Activated CD4-positive, alpha-beta T cell treated with anti-CD3 and anti-CD28 coated beads for 36 hours (primary cell): ENCODE measurements at regions of chr12 and their contacts with region 1.

Region 1: GRCh38 chr12:130761537-130762318 is 45.6 kb upstream of the RIMBP2 start:
- DNase-seq: peak; percentile 84
- ATAC-seq: peak; percentile 68
- H3K4me3 Mint-ChIP-seq: peak overlapping the region; percentile 39
- H3K27ac Mint-ChIP-seq: no peak overlapping the region
- H3K4me1 Mint-ChIP-seq: peaks cover 4% of the 10 kb centered on the region
- H3K27me3 Mint-ChIP-seq: peaks cover 11% of the 10 kb centered on the region

Region 2: DNA sequence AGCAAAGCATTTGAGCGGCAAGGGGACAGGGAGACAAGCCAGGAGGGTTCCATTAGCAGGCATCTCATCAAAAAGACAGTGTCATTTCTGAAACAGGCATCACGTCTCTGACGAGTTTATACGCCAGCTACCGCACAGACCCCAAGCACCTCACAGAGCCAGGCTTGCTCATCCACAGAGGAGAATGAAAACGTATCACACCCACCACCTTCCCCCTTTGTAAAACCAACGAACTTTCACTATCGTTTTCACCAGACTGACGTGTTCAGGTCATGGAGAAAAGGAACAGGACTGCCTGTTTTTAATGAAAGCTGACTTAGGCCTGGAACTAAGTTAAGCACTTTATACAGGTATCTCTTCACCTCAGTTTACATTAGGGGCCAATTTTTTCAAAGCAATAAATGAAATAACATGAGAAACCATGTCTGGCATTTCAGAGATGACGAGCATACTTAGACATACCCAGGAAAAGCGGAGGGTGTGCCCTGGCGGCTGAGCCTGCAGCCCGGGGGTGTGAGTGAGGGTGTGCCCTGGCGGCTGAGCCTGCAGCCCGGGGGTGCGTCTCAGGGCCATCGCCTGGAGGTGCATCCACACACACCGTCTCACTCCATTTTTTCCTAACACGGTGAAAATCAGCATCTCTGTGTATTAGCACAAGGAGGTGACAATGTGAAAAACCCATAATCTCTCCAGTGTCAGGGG is 35.4 kb after region 1 on chr12:
- CTCF ChIA-PET with region 1: no interaction called
- POLR2A ChIA-PET with region 1: no interaction called
- intact Hi-C with region 1: loop called (anchors 1 to 5 kb)
- DNase-seq: peak; percentile 76
- ATAC-seq: peak; percentile 96
- H3K4me3 Mint-ChIP-seq: peak overlapping the region; percentile 49
- H3K27ac Mint-ChIP-seq: peak overlapping the region; percentile 88
- H3K4me1 Mint-ChIP-seq: peaks cover 19% of the 10 kb centered on the region
- H3K27me3 Mint-ChIP-seq: no peaks in the 10 kb centered on the region

Region 3: DNA sequence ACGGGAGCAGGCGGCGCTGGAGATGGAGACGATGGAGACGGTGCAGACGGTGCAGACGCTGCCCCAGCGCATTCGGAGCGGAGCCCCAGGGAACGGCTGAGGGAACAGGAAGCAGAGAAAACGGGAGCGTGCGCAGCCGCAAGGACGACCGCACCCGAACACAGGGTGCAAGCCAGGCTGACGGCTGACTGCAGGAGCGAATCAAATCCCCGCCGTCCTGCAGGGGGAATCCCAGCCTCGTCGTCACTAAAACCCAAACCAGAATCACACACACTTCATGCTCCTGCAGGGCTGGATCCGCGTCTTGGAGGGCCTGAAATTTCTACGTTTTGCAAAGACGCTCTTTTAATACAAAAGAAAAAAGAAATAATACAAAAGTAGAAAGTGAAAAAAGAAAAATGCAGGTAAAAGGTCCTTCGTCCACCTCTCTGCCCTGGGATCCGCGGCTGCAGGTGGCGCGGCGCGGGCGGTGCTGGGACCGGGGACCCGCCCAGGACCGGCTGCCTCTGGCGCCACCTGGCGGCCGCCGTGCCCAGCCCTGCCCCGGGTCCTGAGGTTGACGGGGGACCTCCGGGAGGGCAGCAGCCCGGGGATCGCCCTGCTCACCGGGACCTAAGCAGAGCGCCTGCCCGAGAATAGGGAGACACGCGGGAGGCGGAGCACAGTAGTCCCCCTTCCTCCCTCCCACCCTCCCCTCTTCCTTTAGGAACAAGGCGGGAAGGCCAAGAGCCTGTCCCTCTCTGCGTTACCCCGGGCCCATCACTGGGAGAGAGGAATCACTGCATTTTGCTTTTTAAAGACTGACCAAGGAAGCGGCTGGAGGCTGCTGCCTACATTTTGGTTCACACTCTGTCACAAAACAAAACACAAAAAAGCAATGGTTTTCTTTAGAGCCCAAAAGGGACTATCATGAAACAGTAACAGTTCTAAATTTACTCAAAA is 57.2 kb after region 1 on chr12:
- CTCF ChIA-PET with region 1: interaction called, 6 read pairs
- POLR2A ChIA-PET with region 1: interaction called, 3 read pairs
- intact Hi-C with region 1: loop called (anchors 1 kb)
- DNase-seq: peak; percentile 89
- ATAC-seq: peak; percentile 92
- H3K4me3 Mint-ChIP-seq: peak overlapping the region; percentile 77
- H3K27ac Mint-ChIP-seq: peak overlapping the region; percentile 86
- H3K4me1 Mint-ChIP-seq: peaks cover 6% of the 10 kb centered on the region
- H3K27me3 Mint-ChIP-seq: no peaks in the 10 kb centered on the region

Region 4: DNA sequence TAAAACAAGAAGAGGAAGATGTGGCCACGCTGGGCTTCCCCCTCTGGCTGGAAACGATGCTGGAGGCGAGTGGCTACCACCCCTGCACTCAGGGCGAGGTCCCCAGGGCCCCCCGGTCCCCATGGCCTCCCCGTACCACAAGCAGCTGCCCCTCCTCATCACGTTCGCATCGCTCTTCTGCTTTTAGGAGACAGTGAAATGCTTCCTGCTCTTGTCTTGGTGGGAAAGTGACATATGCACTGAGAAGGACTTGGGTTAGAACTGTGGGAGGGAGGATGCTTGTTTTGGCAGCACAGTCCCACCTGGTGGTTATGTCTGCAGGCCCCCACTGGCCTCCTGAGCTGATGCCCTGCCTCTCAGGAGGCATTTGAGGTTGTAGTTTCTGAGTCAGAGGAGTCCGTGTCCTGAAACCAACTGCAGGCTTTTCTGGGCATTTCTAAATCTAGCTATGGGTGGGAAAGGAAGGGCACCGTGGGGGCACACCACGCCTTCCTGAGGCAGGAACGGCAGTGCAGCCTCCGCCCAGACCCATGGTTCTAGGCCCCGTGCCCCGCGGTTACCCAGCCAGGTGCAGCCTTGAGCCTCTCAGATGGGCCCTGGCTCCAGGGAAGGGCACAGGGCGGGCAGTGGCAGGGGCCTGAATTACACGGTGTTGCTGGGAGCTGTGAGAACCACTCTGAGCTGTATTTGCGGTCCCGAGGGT is 331.3 kb after region 1 on chr12:
- CTCF ChIA-PET with region 1: no interaction called
- POLR2A ChIA-PET with region 1: no interaction called
- intact Hi-C with region 1: loop called in 1 of 2 experiments (anchors 5 kb)
- DNase-seq: peak; percentile 70
- ATAC-seq: peak; percentile 70
- H3K4me3 Mint-ChIP-seq: peak overlapping the region; percentile 45
- H3K27ac Mint-ChIP-seq: peak overlapping the region; percentile 59
- H3K4me1 Mint-ChIP-seq: peaks cover 21% of the 10 kb centered on the region
- H3K27me3 Mint-ChIP-seq: peaks cover 3% of the 10 kb centered on the region